CD8-positive, alpha-beta T cell (primary cell): ENCODE measurements at regions of chr1 and their contacts with region 1.

Region 1: GRCh38 chr1:84668185-84668584 is 22.1 kb downstream of the SSX2IP start:
- DNase-seq: peak in 2 of 9 experiments; percentile 33 to 48
- ATAC-seq: peak; percentile 36
- H3K4me3 ChIP-seq: no peak overlapping the region
- H3K4me3 Mint-ChIP-seq: no peak overlapping the region
- H3K27ac ChIP-seq: no peak overlapping the region
- H3K27ac Mint-ChIP-seq: no peak overlapping the region
- H3K4me1 ChIP-seq: no peaks in the 10 kb centered on the region
- H3K4me1 Mint-ChIP-seq: peaks cover 9% of the 10 kb centered on the region
- H3K27me3 ChIP-seq: no peaks in the 10 kb centered on the region
- H3K27me3 Mint-ChIP-seq: no peaks in the 10 kb centered on the region
- CTCF ChIP-seq: no peak

Region 2: DNA sequence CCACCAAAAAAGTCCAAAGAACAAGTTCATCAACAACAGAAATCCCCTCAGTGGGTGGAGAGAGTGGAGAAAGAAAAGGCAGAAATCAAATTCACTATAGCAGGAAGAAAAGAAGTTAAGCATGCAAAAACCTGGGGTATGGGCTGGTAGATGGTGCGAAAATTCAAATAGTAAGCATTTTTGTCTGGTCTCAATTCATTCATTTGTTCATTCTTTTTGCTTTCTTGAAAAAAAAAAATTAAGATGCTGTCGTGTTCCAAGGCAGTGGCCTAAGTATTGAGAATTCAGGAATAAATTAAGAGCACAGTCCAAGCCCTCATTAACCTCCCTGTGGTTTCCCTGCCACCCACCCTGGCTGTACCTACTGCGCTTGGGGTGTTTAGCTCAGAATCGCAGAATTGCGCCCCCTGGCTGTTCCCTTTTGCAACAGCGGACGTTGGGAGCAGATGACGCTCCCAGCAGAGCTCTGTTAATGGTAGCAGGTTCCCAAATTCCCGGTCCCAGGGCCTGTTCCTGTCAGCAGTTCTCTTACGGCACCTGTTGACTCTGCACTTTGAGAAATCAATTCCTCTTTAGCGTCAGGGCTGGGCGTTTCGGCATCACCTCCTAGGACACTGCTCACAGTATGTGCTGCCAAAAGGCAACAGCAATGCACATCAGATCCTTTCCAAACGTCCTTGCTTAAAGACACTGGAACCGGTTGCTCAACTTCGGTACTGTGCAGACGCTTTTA is 56.1 kb after region 1 on chr1:
- CTCF ChIA-PET with region 1: interaction called, 14 read pairs
- POLR2A ChIA-PET with region 1: no interaction called
- intact Hi-C with region 1: loop called (anchors 1 kb)
- DNase-seq: peak; percentile 10 to 67 (median 57)
- ATAC-seq: peak; percentile 67
- H3K4me3 ChIP-seq: no peak overlapping the region
- H3K4me3 Mint-ChIP-seq: no peak overlapping the region
- H3K27ac ChIP-seq: no peak overlapping the region
- H3K27ac Mint-ChIP-seq: no peak overlapping the region
- H3K4me1 ChIP-seq: no peaks in the 10 kb centered on the region
- H3K4me1 Mint-ChIP-seq: no peaks in the 10 kb centered on the region
- H3K27me3 ChIP-seq: no peaks in the 10 kb centered on the region
- H3K27me3 Mint-ChIP-seq: peaks cover 2% of the 10 kb centered on the region
- CTCF ChIP-seq: peak; percentile 49